ENCODE measurements at regions of chr5 and their contacts with region 1.

Region 1: DNA sequence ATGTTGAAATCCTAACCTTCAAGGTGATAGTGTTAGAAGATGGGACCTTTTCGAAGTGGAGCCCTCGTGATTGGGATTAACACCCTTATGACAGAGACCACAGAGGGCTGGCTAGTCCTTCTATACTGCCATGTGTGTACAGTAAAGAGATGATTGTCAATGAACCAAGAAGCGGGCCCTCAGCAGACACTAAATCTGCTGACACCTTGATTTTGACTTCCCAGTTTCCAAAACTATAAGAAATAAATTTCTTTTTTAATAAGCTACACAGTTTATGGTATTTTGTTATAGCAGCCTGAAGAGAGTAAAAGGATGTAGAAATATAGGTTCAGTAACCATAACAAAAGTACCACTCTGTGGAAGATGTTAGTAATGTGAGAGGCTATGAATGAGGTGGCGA is 419.0 kb upstream of the NUDT12 start:
- DNase-seq: no peak
- H3K4me3 ChIP-seq: no peak overlapping the region
- CTCF ChIP-seq: no peak
- POLR2A ChIP-seq: no peak

Region 2: DNA sequence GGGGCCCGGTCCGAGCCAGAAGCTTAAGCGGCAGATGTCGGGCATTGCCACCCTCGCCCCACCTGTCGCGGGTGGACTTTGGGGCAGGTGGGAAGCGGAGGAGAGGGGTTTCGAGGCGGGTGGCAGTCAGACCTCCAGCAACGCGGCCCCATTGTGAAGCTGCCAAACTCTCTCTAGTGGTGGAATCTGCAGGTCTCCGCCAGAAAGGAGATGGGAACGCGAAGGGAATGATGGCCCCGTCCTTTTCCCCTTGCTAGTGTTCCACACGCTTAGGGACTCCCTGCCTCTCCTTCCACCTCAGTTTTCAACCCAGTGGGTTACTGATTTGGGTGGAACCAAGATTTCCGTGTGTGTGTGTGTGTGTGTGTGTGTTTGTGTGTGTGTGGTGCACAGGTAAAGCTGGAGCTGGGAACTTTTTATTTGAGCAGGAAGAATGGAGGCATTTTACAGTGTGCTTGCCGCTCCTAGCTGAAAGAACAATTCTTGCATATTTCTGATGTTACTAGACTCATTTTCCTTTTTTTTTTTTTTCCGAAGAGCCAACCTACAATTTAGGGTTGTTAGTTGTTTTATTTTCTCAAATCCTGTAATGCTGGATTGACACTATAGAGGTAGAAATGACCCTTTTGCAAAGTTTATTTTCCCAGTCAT is 721.8 kb before region 1 on chr5:
- intact Hi-C with region 1: loop called (anchors 5 kb)
- DNase-seq: peak in 1 of 2 donors; percentile 19
- H3K4me3 ChIP-seq: peak overlapping the region; percentile 78
- CTCF ChIP-seq: no peak
- POLR2A ChIP-seq: no peak

Region 3: GRCh38 chr5:103800743-103801495 is 180.7 kb before region 1 on chr5:
- intact Hi-C with region 1: no loop called
- DNase-seq: no peak
- H3K4me3 ChIP-seq: no peak overlapping the region
- CTCF ChIP-seq: no peak
- POLR2A ChIP-seq: no peak

Region 4: GRCh38 chr5:103918668-103919367 is 62.8 kb before region 1 on chr5:
- intact Hi-C with region 1: no loop called
- DNase-seq: no peak
- H3K4me3 ChIP-seq: no peak overlapping the region
- CTCF ChIP-seq: no peak
- POLR2A ChIP-seq: no peak

Region 5: DNA sequence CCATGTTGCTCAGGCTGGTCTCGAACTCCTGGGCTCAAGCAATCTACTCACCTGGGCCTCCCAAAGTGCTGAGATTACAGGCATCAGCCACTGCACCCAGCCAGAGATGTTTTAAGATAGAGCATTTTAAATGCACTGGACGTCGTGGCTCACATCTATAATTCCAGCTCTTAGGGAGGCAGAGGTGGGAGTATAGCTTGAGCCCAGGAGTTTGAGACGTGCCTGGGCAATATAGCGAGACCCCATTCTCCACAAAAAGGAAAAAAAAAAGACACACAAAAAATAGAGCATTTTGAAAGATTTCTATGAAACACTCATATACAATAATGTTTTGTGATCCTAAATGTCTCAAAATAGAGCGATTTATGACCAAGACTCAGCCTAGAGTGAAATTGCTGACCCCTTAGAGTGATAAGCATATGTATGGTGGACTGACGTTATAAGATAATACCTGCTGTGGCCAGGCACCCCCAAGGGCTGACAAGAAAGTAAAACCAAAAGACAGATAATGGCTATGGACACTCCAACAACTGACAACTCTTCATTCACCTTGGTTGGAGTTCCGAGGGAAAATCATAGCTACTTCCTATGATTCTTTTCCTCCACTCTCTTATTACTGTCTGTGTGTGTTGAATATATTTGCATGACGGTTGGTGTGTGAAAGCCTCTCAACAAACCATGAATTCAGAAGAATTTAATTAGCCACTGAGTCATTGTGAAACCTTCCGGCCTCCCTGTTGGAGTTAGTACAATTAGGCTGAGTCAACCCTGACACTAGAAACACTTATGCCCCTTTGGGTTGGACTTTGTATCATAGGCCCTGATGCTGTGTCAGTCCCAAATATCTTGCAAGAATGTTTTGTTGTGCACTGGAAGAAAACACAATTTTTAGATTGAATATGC is 107.5 kb after region 1 on chr5:
- intact Hi-C with region 1: no loop called
- DNase-seq: no peak
- H3K4me3 ChIP-seq: no peak overlapping the region
- CTCF ChIP-seq: no peak
- POLR2A ChIP-seq: no peak

Region 6: GRCh38 chr5:105936833-105937232 is 1955.2 kb after region 1 on chr5:
- intact Hi-C with region 1: no loop called
- DNase-seq: no peak
- H3K4me3 ChIP-seq: no peak overlapping the region
- CTCF ChIP-seq: no peak
- POLR2A ChIP-seq: no peak